MCF 10A (cell line): ENCODE measurements at regions of chr5 and their contacts with region 1.

Region 1: DNA sequence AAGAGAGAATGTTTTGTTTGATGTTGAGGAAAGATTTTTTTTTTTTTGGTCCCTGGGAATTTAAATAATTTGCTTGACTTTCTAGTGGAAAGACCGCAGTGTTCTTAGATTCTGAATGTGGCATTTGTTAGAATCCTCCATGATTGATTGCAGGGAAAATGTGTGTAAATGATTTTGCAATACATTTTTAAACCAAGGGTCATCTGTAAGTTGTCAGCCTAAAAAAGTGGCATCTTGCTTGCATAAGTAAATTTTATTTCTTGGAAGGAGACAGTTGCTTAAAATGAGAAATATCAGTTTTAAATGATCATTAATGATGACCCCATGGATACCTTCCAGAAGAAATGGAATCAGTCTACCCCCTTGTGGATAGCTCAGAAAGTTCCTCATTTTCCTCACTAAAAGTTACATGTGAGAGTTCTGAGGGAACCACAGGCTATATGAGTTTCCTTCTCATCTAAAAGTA is 105.1 kb upstream of the SLC25A48 start:
- DNase-seq: peak; percentile 48
- H3K4me3 Mint-ChIP-seq: no peak overlapping the region
- H3K27ac Mint-ChIP-seq: no peak overlapping the region
- H3K4me1 Mint-ChIP-seq: no peaks in the 10 kb centered on the region
- H3K27me3 Mint-ChIP-seq: no peaks in the 10 kb centered on the region
- CTCF ChIP-seq: peak; percentile 53

Region 2: GRCh38 chr5:134857401-134857800 is 872.0 kb before region 1 on chr5:
- CTCF ChIA-PET with region 1: no interaction called
- POLR2A ChIA-PET with region 1: no interaction called
- intact Hi-C with region 1: no loop called
- DNase-seq: no peak
- H3K4me3 Mint-ChIP-seq: no peak overlapping the region
- H3K27ac Mint-ChIP-seq: no peak overlapping the region
- H3K4me1 Mint-ChIP-seq: peaks cover 6% of the 10 kb centered on the region
- H3K27me3 Mint-ChIP-seq: no peaks in the 10 kb centered on the region
- CTCF ChIP-seq: no peak

Region 3: GRCh38 chr5:135578685-135579341 is 150.5 kb before region 1 on chr5 and contains the start of gene CXCL14:
- CTCF ChIA-PET with region 1: interaction called, 13 read pairs
- POLR2A ChIA-PET with region 1: interaction called, 3 read pairs
- intact Hi-C with region 1: no loop called
- DNase-seq: peak; percentile 95
- H3K4me3 Mint-ChIP-seq: peak within 1 kb of the TSS; percentile 69
- H3K27ac Mint-ChIP-seq: no peak within 1 kb of the TSS
- H3K4me1 Mint-ChIP-seq: no peaks in the 10 kb centered on the region
- H3K27me3 Mint-ChIP-seq: peaks cover 50% of the 10 kb centered on the region
- CTCF ChIP-seq: no peak
- total RNA-seq, gene CXCL14: not detected in 2 replicates

Region 4: DNA sequence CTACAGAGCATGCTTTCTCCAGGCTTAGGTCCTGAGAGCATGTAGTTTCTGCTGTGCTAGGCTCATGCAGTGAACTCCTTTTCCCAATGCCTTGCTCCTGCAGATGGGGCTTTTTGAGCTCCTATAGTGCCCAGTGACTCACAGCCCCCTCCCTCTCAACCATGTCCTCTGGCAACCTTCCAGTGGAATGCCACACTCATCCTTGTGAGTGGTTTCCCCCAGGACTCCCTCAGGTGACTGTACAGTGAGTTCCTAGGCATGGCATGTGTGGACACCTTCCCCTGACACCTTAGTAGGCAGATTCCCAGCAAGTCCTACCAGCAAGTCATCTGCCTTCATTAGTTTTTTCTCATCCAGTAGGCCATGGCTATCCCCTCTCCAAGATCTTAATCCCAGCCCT is 78.2 kb before region 1 on chr5:
- CTCF ChIA-PET with region 1: interaction called, 11 read pairs
- POLR2A ChIA-PET with region 1: interaction called, 4 read pairs
- intact Hi-C with region 1: no loop called
- DNase-seq: peak; percentile 99
- H3K4me3 Mint-ChIP-seq: no peak overlapping the region
- H3K27ac Mint-ChIP-seq: peak overlapping the region; percentile 29
- H3K4me1 Mint-ChIP-seq: peaks cover 21% of the 10 kb centered on the region
- H3K27me3 Mint-ChIP-seq: no peaks in the 10 kb centered on the region
- CTCF ChIP-seq: no peak

Region 5: DNA sequence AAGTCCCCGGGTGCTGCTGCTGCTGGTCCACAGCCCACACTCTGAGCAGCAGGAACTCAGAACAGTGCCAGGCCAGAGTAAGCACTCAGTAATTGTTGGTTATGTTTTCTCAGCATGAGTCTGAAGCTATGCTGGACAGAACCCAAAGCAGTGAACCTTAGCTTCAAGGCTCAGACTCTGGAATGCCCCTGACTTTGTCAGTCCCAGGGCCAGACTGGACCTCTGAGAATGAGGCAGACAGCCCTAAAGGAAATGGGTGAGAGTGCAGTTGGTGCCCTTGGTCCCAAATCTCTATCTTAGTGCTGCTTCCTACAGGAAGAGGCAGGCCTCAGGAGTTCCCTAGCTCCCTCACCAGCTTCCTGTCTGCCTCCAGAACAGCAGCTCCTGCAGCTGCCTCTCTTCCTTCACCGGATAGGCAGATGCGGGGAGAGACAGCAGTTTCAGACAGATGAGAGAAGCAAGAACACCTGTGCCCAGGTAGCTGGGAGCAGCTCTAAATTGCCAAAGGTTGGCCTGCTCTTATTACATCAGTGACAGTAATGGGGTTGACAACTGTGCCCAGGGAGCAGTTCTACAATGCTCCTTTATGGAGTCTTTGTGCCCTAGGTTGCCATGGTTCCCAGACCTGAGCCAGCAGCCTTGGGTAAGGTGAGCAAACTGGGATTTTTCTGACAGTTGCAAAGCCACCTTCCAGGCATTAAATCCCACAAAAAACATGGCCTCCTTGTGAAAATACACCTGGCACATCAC is 68.4 kb before region 1 on chr5:
- CTCF ChIA-PET with region 1: interaction called, 16 read pairs
- POLR2A ChIA-PET with region 1: no interaction called
- intact Hi-C with region 1: no loop called
- DNase-seq: no peak
- H3K4me3 Mint-ChIP-seq: no peak overlapping the region
- H3K27ac Mint-ChIP-seq: no peak overlapping the region
- H3K4me1 Mint-ChIP-seq: no peaks in the 10 kb centered on the region
- H3K27me3 Mint-ChIP-seq: no peaks in the 10 kb centered on the region
- CTCF ChIP-seq: no peak

Region 6: DNA sequence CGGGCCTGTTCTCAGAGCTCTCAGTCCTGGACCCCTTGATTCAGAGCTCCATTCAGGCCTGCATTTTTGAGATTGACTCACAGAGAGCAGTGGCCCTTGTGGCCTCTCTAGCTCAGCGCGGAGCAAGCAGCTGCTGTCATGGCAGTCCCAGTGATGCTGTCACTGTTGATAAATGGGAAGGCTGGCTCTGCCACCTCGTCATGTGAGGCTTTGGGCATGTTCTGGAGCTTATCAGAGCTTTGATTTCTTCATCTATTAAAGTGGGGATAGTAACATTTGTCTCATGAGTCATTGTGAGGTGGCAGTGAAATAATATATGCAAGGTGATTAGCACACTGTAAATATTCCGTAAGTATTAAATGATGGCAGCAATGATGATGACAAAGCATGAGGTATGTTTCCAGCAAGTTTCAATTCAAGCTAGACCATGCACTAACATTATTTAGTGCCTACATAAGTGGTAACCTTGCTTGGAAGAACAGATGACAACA is 24.2 kb before region 1 on chr5:
- CTCF ChIA-PET with region 1: interaction called, 20 read pairs
- POLR2A ChIA-PET with region 1: interaction called, 3 read pairs
- intact Hi-C with region 1: no loop called
- DNase-seq: peak; percentile 63
- H3K4me3 Mint-ChIP-seq: no peak overlapping the region
- H3K27ac Mint-ChIP-seq: peak overlapping the region; percentile 40
- H3K4me1 Mint-ChIP-seq: peaks cover 9% of the 10 kb centered on the region
- H3K27me3 Mint-ChIP-seq: no peaks in the 10 kb centered on the region
- CTCF ChIP-seq: no peak

Region 7: DNA sequence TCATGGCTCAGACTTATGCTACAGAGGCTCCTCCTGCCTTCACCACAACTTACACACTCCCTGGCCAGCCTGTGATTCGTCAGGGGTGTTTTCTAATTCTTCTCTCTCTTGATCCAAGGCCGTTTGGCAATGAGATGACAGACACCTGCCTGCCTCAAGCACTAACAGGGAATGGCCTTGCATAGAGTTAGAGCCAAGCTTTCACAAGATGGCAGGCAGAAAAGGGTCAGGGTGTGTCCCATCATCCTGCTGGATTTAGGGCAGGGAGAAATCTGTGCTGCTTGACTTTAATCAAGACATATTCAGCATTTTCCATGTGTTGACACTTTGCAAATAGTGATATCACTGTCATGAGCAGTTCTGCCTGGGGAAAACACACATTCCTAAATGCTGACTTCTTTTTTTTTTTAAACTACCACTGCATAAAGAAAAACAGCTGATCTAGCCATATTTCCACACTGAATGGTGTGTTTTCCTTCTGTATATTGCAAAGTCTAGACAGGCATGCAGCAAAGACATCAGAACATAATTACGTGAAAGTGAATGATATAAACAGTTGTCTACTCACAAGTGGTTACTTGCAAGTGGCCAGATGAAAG is 10.1 kb after region 1 on chr5:
- CTCF ChIA-PET with region 1: interaction called, 35 read pairs
- POLR2A ChIA-PET with region 1: interaction called, 9 read pairs
- intact Hi-C with region 1: no loop called
- DNase-seq: no peak
- H3K4me3 Mint-ChIP-seq: no peak overlapping the region
- H3K27ac Mint-ChIP-seq: peak overlapping the region; percentile 20
- H3K4me1 Mint-ChIP-seq: peaks cover 5% of the 10 kb centered on the region
- H3K27me3 Mint-ChIP-seq: peaks cover 22% of the 10 kb centered on the region
- CTCF ChIP-seq: no peak